ENCODE measurements at regions of chr17 and their contacts with region 1.

Region 1: GRCh38 chr17:58352014-58352842 is at the start of gene SUPT4H1:
- DNase-seq: peak; percentile 99
- ATAC-seq: peak; percentile 95
- H3K4me3 ChIP-seq: peak within 1 kb of the TSS; percentile 97
- H3K27ac ChIP-seq: peak within 1 kb of the TSS; percentile 63
- H3K4me1 ChIP-seq: peaks cover 15% of the 10 kb centered on the region
- H3K27me3 ChIP-seq: no peaks in the 10 kb centered on the region
- CTCF ChIP-seq: no peak
- total RNA-seq, gene SUPT4H1: 100.0 and 116 TPM in 2 replicates

Region 2: GRCh38 chr17:58324409-58325288 is 27.6 kb before region 1 on chr17:
- CTCF ChIA-PET with region 1: no interaction called
- POLR2A ChIA-PET with region 1: no interaction called
- intact Hi-C with region 1: loop called (anchors 1 kb)
- DNase-seq: peak; percentile 56
- ATAC-seq: peak; percentile 77
- H3K4me3 ChIP-seq: peak overlapping the region; percentile 75
- H3K27ac ChIP-seq: no peak overlapping the region
- H3K4me1 ChIP-seq: peaks cover 8% of the 10 kb centered on the region; the same call in 1 of the 2 replicates
- H3K27me3 ChIP-seq: no peaks in the 10 kb centered on the region
- CTCF ChIP-seq: no peak

Region 3: DNA sequence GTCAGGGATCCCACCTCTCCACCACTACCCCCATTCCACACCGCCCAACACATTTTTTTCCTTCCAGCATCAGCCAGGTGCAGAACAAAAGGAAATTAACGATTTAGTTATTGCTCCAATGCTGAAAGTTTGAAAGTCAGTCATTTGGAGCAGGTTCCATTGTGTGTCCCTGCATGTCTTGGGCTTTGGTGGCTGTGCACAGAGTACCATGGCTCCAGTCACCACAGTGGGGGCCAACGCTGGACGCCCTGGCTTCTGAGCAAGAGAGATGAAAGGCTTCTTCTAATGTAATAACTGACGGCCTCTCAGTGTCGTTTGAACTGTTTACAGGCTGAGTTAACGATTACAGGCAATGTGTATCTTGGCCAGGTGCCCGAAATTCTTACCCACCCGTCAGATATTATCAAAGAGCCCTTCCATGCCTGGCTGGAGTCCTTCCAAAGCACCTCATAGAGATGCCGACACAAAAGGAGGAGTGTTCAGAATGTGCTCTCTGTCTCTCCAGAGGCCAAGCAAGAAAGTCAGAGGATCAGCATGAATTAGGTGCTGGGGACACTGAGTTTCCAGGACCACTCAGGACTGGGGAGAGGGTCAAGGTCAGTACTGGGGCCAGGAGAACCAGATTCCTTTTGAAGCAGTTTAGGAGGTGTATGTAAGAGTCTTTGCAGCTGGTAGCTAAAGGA is 39.2 kb after region 1 on chr17:
- CTCF ChIA-PET with region 1: no interaction called
- POLR2A ChIA-PET with region 1: no interaction called
- intact Hi-C with region 1: loop called (anchors 1 kb)
- DNase-seq: peak; percentile 99
- ATAC-seq: peak; percentile 58
- H3K4me3 ChIP-seq: no peak overlapping the region
- H3K27ac ChIP-seq: peak overlapping the region; percentile 20; the same call in 1 of the 2 replicates
- H3K4me1 ChIP-seq: peaks cover 57% of the 10 kb centered on the region
- H3K27me3 ChIP-seq: no peaks in the 10 kb centered on the region
- CTCF ChIP-seq: no peak

Region 4: GRCh38 chr17:58764373-58764772 is 412.1 kb after region 1 on chr17:
- CTCF ChIA-PET with region 1: no interaction called
- POLR2A ChIA-PET with region 1: no interaction called
- intact Hi-C with region 1: no loop called
- DNase-seq: no peak
- ATAC-seq: no peak
- H3K4me3 ChIP-seq: no peak overlapping the region
- H3K27ac ChIP-seq: no peak overlapping the region
- H3K4me1 ChIP-seq: no peaks in the 10 kb centered on the region
- H3K27me3 ChIP-seq: peaks cover 66% of the 10 kb centered on the region
- CTCF ChIP-seq: no peak

Region 5: DNA sequence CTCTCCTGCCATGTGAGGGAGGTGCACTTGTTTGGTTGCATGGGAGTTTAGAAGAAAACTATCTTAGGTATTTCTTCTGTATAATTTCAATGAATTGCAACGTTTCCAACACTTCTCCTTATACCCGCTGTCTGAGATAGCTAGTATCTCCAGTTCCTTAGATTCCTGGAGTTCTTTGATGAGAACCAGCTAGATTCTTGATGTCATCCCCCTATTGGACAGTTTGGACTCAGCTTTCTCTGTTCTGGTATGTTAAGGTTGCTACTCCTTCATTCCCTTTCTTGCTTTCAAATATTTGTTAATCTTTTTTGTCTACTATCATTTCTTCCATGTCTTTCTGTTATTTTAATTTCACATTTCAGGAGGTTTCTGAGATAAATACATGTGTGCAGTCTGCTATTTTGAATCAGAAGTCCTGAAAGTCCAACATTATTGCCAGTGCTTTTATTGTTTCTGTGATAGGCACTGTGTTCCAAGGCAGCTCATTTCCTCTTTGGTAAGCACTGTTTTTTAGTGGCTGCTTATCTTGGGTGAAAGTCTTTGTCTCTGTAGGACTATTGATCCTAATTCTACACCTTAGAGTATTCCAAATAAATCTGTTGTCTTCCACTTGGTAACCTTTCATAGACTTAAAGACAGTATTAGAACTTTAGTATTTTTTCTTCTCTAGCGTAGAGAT is 479.4 kb after region 1 on chr17:
- CTCF ChIA-PET with region 1: no interaction called
- POLR2A ChIA-PET with region 1: no interaction called
- intact Hi-C with region 1: no loop called
- DNase-seq: no peak
- ATAC-seq: no peak
- H3K4me3 ChIP-seq: no peak overlapping the region
- H3K27ac ChIP-seq: no peak overlapping the region
- H3K4me1 ChIP-seq: no peaks in the 10 kb centered on the region
- H3K27me3 ChIP-seq: peaks cover 45% of the 10 kb centered on the region
- CTCF ChIP-seq: no peak

Measured in PC-3 (cell line).